ENCODE measurements at regions of chr3 and their contacts with region 1.

Region 1: DNA sequence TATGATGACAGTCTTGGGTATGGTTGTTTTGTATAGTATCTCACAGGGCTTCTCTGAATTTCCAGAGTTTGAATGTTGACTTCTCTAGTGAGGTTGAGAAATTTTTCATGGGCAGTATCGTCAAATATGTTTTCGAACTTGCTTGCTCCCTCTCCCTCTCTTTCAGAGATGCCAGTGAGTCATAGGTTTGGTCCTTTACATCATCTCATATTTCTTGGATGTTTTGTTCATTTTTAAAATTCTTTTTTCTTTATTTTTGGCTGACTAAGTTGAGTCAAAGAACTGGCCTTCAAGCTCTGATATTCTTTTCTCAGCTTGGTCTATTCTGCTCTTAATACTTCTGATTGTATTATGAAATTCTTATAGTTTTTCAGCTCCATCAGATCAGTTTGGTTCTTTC is 282.3 kb upstream of the NECTIN3 start:
- DNase-seq: no peak
- ATAC-seq: no peak
- H3K4me3 ChIP-seq: no peak overlapping the region
- H3K4me3 Mint-ChIP-seq: no peak overlapping the region
- H3K27ac ChIP-seq: no peak overlapping the region
- H3K27ac Mint-ChIP-seq: no peak overlapping the region
- H3K4me1 ChIP-seq: no peaks in the 10 kb centered on the region
- H3K4me1 Mint-ChIP-seq: no peaks in the 10 kb centered on the region
- H3K27me3 ChIP-seq: no peaks in the 10 kb centered on the region
- H3K27me3 Mint-ChIP-seq: peaks cover 3 to 14% (median 12%) of the 10 kb centered on the region in 5 donors

Region 2: DNA sequence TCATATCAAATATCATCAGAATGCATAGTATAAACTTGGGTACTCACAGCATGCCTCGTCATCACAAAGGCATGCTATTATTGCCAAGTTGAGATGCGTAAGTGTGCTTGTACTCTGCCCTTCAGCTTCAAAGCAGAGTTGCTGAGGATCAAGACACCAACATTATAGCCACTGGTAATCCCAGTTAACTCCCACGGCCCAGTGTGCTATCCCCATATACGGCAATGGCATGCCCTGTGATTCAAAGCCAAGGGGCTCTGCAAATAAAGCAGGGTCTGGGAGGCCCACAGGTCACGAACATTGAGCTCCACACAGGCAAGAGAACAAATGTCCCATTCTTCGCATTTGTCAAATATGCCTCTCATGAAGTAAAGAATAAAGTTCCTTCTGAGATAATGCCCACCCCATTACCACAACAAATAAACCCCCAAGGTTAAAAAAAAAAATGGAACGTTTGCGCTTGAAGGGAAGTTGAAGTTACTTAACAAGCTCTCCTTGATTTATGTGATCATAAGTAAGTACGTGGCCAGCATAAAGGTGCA is 15.8 kb before region 1 on chr3:
- CTCF ChIA-PET with region 1: interaction called, 4 read pairs
- POLR2A ChIA-PET with region 1: no interaction called
- intact Hi-C with region 1: loop called in 1 of 2 experiments (anchors 1 kb)
- DNase-seq: no peak
- ATAC-seq: no peak
- H3K4me3 ChIP-seq: no peak overlapping the region
- H3K4me3 Mint-ChIP-seq: no peak overlapping the region
- H3K27ac ChIP-seq: no peak overlapping the region
- H3K27ac Mint-ChIP-seq: peak overlapping the region in 1 of 9 donors; percentile 33
- H3K4me1 ChIP-seq: no peaks in the 10 kb centered on the region
- H3K4me1 Mint-ChIP-seq: no peaks in the 10 kb centered on the region
- H3K27me3 ChIP-seq: no peaks in the 10 kb centered on the region
- H3K27me3 Mint-ChIP-seq: peaks cover 0 to 7% (median 2%) of the 10 kb centered on the region in 5 donors